Cardiac septum (tissue), 1 donor: ENCODE measurements at regions of chr18 and their contacts with region 1.

Region 1: DNA sequence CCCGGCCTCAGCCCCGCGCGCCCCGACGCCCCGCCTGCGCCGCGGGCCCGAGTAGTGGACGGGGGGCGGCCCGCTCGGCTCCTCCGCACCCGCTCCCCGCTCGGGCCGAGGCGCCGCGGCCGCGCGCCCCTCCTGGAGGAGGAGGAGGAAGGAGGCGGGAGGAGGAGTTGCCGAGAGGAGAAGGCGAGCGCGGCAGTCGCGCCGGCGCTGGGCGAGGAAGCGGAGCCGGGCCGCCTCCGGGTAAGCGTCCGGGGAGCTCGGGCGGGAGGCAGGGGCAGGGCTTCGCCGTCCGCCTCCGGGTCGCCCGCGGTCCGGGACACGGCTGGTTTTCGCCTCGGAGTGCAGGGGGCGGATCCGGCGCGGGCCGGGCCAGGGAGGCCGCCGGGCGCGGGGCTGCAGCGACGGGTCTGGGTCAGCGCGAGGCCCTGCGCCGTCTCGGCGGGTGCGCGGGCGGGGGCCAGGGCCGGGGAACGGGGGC is at the start of gene SOCS6:
- DNase-seq: no peak
- total RNA-seq, gene SOCS6: 22.8 TPM

Region 2: GRCh38 chr18:70205421-70206397 is 83.2 kb before region 1 on chr18 and contains the start of gene RTTN:
- intact Hi-C with region 1: loop called (anchors 2 kb)
- DNase-seq: peak; percentile 94
- total RNA-seq, gene RTTN: 12.2 TPM

Region 3: DNA sequence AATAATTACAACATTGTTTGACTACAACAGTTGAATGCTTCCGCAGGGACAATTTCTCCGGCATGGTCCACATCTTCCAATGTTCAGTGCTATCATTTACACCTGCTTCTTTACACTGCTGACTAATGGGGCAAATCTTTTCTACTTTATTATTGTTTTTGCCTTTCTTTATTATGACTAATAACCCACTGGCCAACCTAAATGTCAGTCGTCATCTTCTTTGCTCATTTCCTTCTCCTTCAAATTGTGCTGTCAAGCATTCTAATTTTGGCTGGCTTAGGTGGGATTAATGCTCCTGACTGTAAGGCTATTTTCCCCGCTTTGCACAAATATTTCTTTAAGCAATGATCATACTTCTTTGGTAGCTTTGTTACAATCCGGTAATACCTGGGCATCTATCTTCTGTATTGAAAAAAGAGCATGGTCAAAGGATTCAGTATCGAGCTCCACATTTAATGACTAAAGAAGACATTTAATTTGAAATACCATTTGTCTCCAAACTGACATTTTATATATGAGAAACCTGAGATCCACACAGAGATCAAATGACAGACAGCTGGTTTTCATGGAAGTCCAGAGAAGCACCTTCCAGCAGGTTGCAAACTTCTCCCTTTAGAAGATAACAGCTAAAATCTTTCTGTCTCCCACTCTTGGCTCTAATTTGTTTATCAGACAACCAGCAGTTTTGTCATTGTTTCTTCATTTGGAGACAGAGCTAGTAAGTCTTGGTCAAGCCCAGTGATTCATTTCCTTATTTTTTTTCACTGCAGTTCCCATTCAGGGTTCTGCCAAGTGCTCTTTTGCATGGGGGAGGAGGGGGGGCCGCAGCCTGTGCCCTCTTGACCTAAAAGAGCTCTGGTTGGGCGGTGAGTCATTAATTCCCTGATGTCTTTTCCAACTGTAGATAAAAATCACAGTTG is 132.8 kb after region 1 on chr18:
- intact Hi-C with region 1: loop called (anchors 5 kb)
- DNase-seq: peak; percentile 84